Dendritic cell treated with granulocyte-macrophage colony-stimulating factor and Interleukin-4, amounts not matched to agents 40 ng/mL and 50 ng/mL, for 4 days (primary cell): ENCODE measurements at regions of chr11 and their contacts with region 1.

Region 1: GRCh38 chr11:125141686-125142535 is 22.6 kb upstream of the PKNOX2 start:
- H3K4me3 Mint-ChIP-seq: peak overlapping the region; percentile 46
- H3K27ac Mint-ChIP-seq: no peak overlapping the region
- H3K4me1 Mint-ChIP-seq: peaks cover 15% of the 10 kb centered on the region
- H3K27me3 Mint-ChIP-seq: peaks cover 41% of the 10 kb centered on the region

Region 2: GRCh38 chr11:124961972-124962609 is 179.8 kb before region 1 on chr11:
- intact Hi-C with region 1: loop called (anchors 1 kb)
- H3K4me3 Mint-ChIP-seq: no peak overlapping the region
- H3K27ac Mint-ChIP-seq: no peak overlapping the region
- H3K4me1 Mint-ChIP-seq: peaks cover 8% of the 10 kb centered on the region
- H3K27me3 Mint-ChIP-seq: no peaks in the 10 kb centered on the region

Region 3: DNA sequence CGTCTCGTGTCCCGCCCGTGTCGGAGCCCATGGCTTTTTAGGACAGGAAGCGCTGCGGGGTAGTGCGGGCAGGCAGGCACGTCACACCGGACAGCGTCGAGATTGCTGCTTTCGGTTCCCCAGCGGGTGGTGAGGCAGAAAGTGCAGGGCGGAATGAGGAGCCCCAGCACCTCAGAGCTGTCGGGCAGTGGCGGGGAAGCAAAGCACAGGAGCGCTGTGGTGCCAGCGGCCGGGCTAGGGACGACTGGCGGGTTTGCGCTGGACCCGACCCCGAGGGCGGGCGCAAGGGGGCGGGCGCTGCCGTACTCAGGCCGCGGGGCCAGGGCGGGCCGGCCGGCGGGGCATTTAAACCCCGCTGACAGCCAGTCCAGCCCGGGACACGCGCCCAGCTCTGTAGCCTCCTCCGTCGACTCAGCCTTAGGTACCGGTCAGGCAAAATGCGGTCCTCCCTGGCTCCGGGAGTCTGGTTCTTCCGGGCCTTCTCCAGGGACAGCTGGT is 78.9 kb before region 1 on chr11 and contains the start of gene SLC37A2:
- intact Hi-C with region 1: loop called (anchors 2 kb)
- H3K4me3 Mint-ChIP-seq: peak within 1 kb of the TSS; percentile 87
- H3K27ac Mint-ChIP-seq: peak within 1 kb of the TSS; percentile 96
- H3K4me1 Mint-ChIP-seq: peaks cover 37% of the 10 kb centered on the region
- H3K27me3 Mint-ChIP-seq: no peaks in the 10 kb centered on the region

Region 4: GRCh38 chr11:125091247-125091876 is 50.5 kb before region 1 on chr11:
- intact Hi-C with region 1: loop called (anchors 2 kb)
- H3K4me3 Mint-ChIP-seq: no peak overlapping the region
- H3K27ac Mint-ChIP-seq: peak overlapping the region; percentile 56
- H3K4me1 Mint-ChIP-seq: peaks cover 27% of the 10 kb centered on the region
- H3K27me3 Mint-ChIP-seq: no peaks in the 10 kb centered on the region

Region 5: GRCh38 chr11:125123947-125124617 is 17.8 kb before region 1 on chr11:
- intact Hi-C with region 1: no loop called
- H3K4me3 Mint-ChIP-seq: peak overlapping the region; percentile 58
- H3K27ac Mint-ChIP-seq: peak overlapping the region; percentile 89
- H3K4me1 Mint-ChIP-seq: peaks cover 21% of the 10 kb centered on the region
- H3K27me3 Mint-ChIP-seq: peaks cover 18% of the 10 kb centered on the region

Region 6: DNA sequence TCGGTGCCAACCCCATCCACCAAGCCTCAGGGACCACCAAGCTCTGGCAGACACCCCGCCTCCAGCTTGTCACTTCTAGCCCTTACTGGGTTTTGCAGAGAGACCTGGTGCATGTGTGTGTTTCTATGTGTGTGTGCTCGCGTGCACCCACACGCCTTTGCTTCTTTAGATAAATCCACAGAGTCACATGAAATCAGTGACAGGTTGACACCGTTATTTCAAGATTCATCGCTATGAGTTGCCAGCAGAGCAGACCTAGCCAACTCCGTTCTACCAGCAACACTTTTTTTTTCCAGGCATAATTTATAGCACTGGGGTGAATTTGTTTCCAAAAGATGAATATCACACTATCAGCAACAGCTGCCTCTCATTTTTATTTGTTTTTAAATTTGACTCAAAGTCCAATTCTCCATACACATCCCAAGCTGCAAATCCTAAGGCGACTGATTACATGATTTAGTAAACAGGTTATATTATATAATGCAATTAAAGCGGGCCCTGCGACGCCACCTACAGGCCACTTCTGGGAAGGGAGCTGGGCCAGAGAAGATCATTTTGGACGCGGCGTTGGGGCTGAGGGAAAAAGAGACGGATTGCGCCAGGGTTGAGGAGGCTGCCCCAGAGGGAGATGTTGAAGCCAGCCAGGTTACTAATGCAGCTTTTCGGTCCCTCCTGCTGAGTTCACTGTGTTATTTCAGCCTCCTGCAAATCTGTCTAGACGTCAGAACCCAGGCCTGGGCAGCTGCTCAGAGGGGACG is 203.7 kb after region 1 on chr11:
- intact Hi-C with region 1: loop called (anchors 10 kb)
- H3K4me3 Mint-ChIP-seq: no peak overlapping the region
- H3K27ac Mint-ChIP-seq: no peak overlapping the region
- H3K4me1 Mint-ChIP-seq: peaks cover 6% of the 10 kb centered on the region
- H3K27me3 Mint-ChIP-seq: peaks cover 24% of the 10 kb centered on the region